ENCODE measurements at regions of chr1 and their contacts with region 1.

Region 1: DNA sequence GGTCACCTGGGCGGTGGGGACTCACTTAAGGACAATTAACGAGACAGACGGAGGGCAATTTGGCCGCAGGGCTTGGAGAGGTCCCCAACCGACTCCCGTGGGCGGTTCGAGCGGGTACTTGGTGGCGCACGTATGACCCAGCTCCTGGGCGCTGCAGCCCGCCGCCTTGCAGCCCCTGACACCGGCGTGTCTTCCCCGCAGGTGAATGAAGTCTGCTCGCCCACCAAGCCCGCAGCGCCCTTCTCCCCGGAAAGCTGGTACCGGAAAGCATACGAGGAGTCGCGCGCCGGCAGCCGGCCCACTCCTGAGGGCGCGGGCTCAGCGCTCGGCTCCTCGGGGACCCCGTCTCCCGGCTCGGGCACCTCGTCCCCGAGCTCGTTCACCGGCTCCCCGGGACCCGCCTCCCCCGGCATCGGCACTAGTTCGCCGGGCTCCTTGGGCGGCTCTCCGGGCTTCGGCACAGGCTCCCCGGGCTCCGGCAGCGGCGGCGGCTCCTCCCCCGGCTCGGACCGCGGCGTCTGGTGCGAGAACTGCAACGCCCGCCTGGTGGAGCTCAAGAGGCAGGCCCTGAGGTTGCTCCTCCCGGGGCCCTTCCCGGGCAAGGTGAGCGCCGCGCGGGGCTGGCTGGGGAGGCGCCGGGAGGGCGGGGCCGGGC is 1.4 kb downstream of the KIF26B start:
- DNase-seq: peak; percentile 82
- H3K4me3 ChIP-seq: peak overlapping the region; percentile 47 to 80 (median 73)
- H3K27ac ChIP-seq: no peak overlapping the region
- H3K4me1 ChIP-seq: peaks cover 26% of the 10 kb centered on the region
- H3K27me3 ChIP-seq: no peaks in the 10 kb centered on the region
- CTCF ChIP-seq: peak; percentile 52 to 79

Region 2: GRCh38 chr1:245715970-245716369 is 559.8 kb after region 1 on chr1:
- CTCF ChIA-PET with region 1: no interaction called
- dilution Hi-C with region 1: no loop called
- in situ Hi-C with region 1: no loop called
- intact Hi-C with region 1: loop called (anchors 5 kb)
- DNase-seq: peak; percentile 98
- H3K4me3 ChIP-seq: no peak overlapping the region
- H3K27ac ChIP-seq: no peak overlapping the region
- H3K4me1 ChIP-seq: peaks cover 12% of the 10 kb centered on the region
- H3K27me3 ChIP-seq: no peaks in the 10 kb centered on the region
- CTCF ChIP-seq: no peak

Region 3: DNA sequence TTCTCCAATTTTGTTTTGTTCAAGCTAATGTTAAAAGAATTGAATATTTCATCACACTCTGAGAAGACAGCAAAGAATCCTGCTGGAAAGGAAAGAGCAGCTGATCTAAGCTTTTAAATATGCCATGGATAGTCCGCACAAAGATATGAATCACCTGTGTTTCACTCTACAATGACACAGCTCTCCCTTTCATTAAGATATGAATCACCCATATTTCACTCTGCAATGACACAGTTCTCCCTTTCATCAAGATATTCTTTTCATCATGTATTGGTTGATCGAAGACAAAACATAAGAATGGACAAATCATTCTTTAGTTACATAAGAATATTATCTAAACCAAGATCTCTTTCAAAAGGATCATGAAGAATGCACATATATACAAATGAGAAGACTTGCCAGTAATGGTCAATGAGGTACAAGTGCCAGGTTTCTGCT is 983.6 kb after region 1 on chr1:
- CTCF ChIA-PET with region 1: no interaction called
- dilution Hi-C with region 1: no loop called
- in situ Hi-C with region 1: no loop called
- intact Hi-C with region 1: loop called (anchors 5 kb)
- DNase-seq: peak; percentile 96
- H3K4me3 ChIP-seq: no peak overlapping the region
- H3K27ac ChIP-seq: peak overlapping the region; percentile 95
- H3K4me1 ChIP-seq: peaks cover 42% of the 10 kb centered on the region
- H3K27me3 ChIP-seq: no peaks in the 10 kb centered on the region
- CTCF ChIP-seq: no peak

Region 4: GRCh38 chr1:246450611-246451251 is 1294.5 kb after region 1 on chr1:
- CTCF ChIA-PET with region 1: no interaction called
- dilution Hi-C with region 1: no loop called
- in situ Hi-C with region 1: loop called in 1 of 2 experiments (anchors 5 kb)
- intact Hi-C with region 1: loop called (anchors 1 kb)
- DNase-seq: peak; percentile 23
- H3K4me3 ChIP-seq: no peak overlapping the region
- H3K27ac ChIP-seq: no peak overlapping the region
- H3K4me1 ChIP-seq: peaks cover 3% of the 10 kb centered on the region
- H3K27me3 ChIP-seq: no peaks in the 10 kb centered on the region
- CTCF ChIP-seq: peak; percentile 62 to 74

Region 5: DNA sequence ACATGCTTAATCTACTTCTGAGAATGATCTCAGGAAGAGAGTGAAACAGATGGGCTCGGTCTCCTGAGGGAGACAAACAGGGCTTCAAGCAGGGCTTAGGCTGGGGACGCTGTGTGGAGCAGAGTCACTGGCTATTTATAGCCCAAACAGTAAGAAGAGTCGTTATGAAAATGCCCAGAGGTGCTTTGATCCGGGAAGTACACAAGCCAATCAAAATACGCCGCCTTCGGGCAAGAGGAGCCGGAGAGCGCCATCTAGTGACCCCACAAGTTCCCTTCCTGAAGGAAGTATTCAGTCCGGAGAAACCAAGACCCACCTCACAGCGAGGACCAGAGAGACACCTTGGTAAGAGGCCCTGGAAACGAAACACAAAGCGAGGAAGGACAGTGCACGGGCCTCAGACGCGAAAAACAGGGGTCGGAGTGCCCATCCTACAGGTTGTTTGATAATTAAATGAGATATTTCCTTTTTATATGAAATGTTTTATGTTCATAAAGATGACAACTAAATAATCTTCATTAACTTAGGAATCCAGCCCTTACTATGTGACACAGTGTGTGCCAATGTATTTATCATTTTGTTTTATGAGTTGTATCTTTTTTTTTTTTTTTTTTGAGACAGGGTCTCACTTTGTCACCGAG is 1543.0 kb after region 1 on chr1:
- CTCF ChIA-PET with region 1: no interaction called
- dilution Hi-C with region 1: no loop called
- in situ Hi-C with region 1: loop called in 1 of 2 experiments (anchors 25 kb)
- intact Hi-C with region 1: loop called (anchors 10 kb)
- DNase-seq: peak; percentile 75
- H3K4me3 ChIP-seq: no peak overlapping the region
- H3K27ac ChIP-seq: no peak overlapping the region
- H3K4me1 ChIP-seq: no peaks in the 10 kb centered on the region
- H3K27me3 ChIP-seq: no peaks in the 10 kb centered on the region
- CTCF ChIP-seq: peak; percentile 63 to 87